ENCODE measurements at regions of chr1 and their contacts with region 1.

Region 1: DNA sequence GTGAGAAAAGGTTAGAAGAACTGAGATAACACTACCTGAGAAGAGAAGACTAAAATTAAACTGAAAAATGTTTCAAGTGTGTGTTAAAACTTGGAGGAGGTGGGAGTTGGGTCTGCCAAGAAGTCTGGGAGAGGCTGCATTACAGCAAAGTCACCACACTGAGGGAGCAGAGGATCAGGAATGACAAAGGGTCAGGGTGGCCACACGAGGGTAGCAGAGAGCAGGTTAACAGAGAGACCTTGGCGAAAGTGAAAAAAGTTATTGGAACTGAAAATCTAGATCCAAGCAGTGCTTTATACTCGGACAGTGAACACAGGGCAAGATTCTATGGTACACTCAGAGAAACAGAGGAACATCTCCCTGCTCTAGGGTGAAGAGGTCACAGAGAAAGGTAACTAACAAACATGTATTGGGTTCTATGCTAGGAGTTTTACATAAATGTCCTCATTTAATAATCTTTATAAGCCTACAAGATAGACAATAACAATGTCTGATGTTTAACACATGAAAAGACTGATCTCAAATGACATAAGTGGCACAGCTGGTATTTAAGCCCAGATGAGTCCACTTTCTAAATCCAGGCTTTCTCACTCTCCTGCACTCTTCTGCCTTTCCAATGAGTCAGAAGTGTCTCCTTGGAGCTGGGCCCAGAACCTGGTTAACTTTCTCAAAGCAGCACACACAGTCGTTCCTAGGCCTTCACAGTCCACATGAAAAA is 10.3 kb upstream of the CADM3 start:
- DNase-seq: peak; percentile 89
- ATAC-seq: peak; percentile 95
- H3K4me3 ChIP-seq: no peak overlapping the region
- H3K27ac ChIP-seq: no peak overlapping the region
- H3K4me1 ChIP-seq: peaks cover 8% of the 10 kb centered on the region
- H3K27me3 ChIP-seq: peaks cover 50% of the 10 kb centered on the region
- CTCF ChIP-seq: peak; percentile 100

Region 2: GRCh38 chr1:159197561-159198557 is 36.7 kb after region 1 on chr1:
- CTCF ChIA-PET with region 1: interaction called, 8 read pairs
- POLR2A ChIA-PET with region 1: no interaction called
- intact Hi-C with region 1: loop called (anchors 1 kb)
- DNase-seq: peak; percentile 88
- ATAC-seq: peak; percentile 94
- H3K4me3 ChIP-seq: no peak overlapping the region
- H3K27ac ChIP-seq: no peak overlapping the region
- H3K4me1 ChIP-seq: no peaks in the 10 kb centered on the region
- H3K27me3 ChIP-seq: peaks cover 85% of the 10 kb centered on the region
- CTCF ChIP-seq: peak; percentile 91

Region 3: GRCh38 chr1:159214149-159214760 is 53.1 kb after region 1 on chr1:
- CTCF ChIA-PET with region 1: interaction called, 12 read pairs
- POLR2A ChIA-PET with region 1: no interaction called
- intact Hi-C with region 1: loop called (anchors 1 kb)
- DNase-seq: peak; percentile 72
- ATAC-seq: peak; percentile 74
- H3K4me3 ChIP-seq: no peak overlapping the region
- H3K27ac ChIP-seq: no peak overlapping the region
- H3K4me1 ChIP-seq: peaks cover 4% of the 10 kb centered on the region; the same call in 1 of the 2 replicates
- H3K27me3 ChIP-seq: peaks cover 29% of the 10 kb centered on the region
- CTCF ChIP-seq: peak; percentile 92

Measured in PC-3 (cell line).